ENCODE measurements at regions of chr2 and their contacts with region 1.

Region 1: DNA sequence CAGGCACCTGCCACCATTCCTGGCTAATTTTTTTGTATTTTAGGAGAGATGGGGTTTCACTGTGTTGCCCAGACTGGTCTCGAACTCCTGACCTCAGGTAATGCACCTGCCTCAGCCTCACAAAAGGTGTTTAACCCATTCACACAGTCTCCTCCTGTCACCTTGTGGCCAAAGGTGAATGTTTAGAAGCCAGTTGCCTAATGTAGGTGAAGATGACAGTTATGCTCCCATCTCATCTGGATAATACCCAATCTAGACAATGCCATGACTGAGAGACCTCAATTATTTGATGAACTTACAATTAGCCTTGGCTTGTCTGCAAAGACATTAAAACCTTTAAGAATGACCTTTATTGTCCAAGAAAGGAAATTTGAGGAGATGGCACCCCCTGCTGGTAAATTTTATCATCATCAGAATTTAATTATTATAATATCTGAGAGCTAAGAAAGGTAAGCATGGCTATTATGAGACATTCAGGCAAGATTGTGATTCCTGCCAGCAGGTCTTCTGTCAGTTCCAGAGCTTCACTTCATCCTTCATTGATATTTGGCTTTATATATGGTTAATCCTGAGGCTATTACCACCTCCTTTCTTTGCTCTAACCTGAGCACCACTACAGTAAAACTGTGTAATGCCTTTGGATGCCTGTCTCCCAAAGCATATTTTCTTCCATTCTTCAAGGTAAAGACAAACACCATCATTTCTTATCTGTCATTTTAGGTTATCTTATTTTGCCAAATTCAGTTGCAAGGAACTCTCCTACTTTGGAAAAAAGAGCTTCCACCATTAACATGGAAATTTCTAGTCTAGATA is 117.6 kb downstream of the FAM124B start:
- DNase-seq: peak in 1 of 2 donors; percentile 13
- ATAC-seq: peak; percentile 90

Region 2: DNA sequence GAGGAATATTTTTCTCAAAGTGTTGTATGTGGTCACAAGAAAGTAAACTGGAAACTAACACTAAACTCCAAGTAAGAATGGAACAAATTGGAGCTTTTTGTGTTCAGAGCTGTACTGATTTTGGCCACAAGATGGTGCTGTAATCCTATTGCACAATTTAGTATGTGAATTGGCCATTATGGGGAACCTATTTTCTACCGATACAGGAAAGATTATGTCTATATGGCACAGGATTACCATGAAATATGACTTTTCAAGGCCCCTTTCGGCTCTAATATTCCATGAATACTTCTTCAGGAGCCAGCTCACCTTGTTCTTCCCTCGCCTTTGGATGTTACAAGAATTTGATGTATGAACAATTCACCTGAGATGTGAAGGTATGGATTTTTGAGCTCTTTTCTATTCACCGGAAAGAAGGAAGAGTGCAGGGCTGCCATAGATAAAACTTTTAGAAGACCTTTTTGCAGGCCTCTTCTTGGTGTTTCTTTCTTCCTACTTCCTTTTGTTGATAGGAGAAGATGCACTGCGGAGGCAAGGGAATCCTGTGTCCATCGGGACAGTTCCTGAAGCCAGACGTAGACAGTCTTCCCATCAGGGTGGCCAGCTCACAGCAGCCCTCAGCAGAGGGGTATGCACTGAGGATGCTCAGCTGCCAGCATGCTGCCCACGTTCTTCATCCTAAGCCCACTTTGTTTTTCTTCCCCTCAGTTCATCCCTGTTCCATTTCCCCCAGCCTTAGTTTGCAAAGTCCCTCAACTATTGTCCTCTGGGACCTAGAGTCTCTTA is 313.8 kb before region 1 on chr2:
- intact Hi-C with region 1: loop called in 1 of 2 experiments (anchors 5 kb)
- DNase-seq: peak in 1 of 2 donors; percentile 38
- ATAC-seq: peak; percentile 58

Region 3: DNA sequence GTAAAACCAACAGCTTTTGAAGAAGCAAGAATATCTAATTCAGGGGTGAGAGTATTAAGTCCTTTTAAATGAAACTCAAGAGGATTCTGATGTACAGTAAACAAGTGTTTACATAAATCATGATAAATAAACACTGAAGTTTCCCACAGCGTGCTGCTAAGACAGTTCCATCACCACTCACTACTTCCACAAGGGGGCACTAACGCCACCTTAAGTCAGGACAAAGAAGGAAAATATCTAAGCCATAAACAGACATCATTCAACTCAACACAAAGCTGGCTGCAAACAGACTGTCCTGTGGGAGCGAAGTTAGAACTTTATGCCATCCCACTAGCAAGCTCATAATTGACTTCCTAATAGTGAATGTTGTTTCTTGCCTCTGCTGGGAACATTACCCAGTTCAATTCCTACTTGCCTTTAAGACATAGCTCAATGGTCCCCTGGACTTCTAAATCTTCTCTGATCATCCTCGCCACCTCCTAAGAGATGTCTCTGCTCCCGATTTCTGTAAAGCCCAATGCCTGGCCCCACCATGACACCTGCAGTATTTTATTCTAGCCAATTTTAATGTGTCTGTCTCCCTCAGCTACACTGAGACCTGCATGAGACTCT is 290.6 kb before region 1 on chr2:
- intact Hi-C with region 1: loop called (anchors 5 to 10 kb)
- DNase-seq: peak; percentile 50 to 78
- ATAC-seq: peak; percentile 87

Region 4: DNA sequence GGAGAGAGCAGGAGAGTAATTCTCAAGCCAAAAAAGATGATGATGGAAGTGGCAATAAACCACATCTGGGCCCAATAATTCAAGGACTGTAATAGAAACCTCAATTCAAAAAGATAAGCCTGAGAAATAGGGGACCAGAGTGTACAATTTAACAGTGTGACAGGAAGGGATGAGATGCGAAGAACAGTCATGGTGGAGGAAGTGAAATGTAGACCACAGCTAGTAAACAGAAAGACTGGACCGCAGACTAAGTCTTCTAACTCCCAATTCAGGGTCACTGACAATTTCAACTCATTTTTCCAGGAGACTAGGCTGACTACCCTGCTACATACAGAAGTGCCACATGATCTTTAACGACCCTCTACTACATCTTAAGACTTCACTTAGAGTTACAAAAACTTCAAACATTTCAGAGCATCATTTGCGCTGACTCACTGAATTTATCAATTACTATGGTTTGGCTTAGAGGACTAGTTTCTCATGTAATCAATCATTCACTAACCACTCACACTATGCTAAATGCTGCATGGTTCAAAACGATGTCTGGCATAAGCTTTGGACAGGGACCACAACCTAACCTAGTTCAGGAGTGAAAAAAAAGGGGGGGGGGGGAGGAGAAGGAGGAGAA is 291.9 kb after region 1 on chr2:
- intact Hi-C with region 1: no loop called
- DNase-seq: no peak
- ATAC-seq: no peak